Activated CD8-positive, alpha-beta memory T cell treated with anti-CD3 and anti-CD28 coated beads, Interleukin-2, amount 10 ng/mL, durations not matched to agents 7 days and 5 days (primary cell): ENCODE measurements at regions of chr10 and their contacts with region 1.

Region 1: DNA sequence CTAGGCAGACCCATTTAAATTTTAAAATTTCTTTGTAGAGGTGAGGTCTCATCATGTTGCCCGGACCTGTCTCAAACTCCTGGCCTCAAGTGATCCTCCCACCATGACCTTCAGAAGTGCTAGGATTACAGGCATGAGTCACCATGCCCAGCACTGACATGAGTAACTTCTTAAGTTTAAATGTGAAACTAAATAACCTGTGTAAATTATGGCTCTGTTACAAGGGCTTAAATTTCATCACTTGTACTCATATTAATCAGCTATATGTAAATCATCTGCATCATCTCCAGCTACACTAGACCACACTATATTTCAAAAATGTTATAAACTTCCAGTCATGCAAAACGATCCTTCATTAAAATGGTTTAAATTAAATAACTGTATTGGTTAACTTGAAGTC is 56.1 kb downstream of the ATAD1 start:
- DNase-seq: peak; percentile 73
- ATAC-seq: peak; percentile 98
- H3K4me3 Mint-ChIP-seq: no peak overlapping the region
- H3K27ac Mint-ChIP-seq: peak overlapping the region; percentile 76
- H3K4me1 Mint-ChIP-seq: peaks cover 20% of the 10 kb centered on the region
- H3K27me3 Mint-ChIP-seq: no peaks in the 10 kb centered on the region

Region 2: DNA sequence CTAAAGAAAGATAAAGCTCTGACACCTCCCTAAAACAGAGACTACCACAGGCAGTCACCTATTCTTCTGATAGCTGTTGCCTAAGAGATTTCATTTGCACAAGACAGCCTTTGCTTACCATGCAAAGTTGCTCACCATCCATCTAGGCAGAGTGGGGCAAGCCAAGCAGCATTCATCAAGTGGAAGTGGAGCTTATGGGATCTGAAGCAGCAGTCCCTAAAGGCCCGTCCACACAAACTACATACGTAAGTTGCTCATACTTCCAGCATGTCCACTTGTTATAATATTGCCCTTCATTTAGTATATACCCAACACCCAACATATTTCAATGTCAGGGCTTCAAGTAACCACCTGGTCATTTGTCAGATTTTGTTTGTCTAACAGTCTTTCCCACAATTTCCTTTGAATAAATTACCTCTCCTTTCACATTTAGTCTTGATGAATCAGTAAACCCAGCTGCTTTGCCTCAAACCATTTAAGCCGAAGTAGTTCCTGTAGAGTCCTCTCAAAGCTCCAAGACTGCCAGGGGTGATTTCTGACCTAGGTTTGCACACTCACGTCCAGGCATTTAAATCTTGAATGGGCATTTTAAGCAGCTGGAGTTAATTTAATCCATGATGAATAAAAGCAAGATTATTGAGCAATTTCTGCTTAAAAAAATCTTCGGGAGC is 11.8 kb before region 1 on chr10:
- CTCF ChIA-PET with region 1: interaction called, 10 read pairs
- DNase-seq: no peak
- ATAC-seq: peak; percentile 16
- H3K4me3 Mint-ChIP-seq: no peak overlapping the region
- H3K27ac Mint-ChIP-seq: no peak overlapping the region
- H3K4me1 Mint-ChIP-seq: peaks cover 25% of the 10 kb centered on the region
- H3K27me3 Mint-ChIP-seq: no peaks in the 10 kb centered on the region